Heart left ventricle (tissue), 16 donors: ENCODE measurements at regions of chr21 and their contacts with region 1.

Region 1: DNA sequence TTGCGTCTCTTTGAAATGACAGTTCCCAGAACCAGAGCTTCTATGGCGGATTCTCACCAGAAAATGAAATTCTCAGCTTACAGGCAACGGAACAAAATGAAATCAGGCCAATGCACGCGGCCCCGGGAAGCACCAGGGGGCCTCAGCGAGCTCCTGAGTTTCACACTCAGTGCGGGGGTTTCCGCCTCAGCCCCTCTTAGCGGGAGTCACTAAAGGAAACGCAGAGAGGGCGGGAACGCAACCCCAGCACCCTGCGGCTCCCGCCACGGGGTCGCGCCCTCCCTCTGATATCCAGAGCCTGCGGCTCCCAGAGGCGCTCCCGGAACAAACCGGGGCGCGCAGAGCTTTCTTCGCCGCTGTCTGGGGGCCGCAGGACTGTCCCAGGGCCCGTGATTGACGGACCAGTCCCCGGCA is 7.9 kb upstream of the COL6A1 start:
- DNase-seq: peak; percentile 87 to 92 (median 90)
- ATAC-seq: peak; percentile 39 to 48 (median 43)
- H3K4me3 ChIP-seq: peak overlapping the region; percentile 29 to 69 (median 60)
- H3K27ac ChIP-seq: peak overlapping the region; percentile 90 to 99 (median 98)
- H3K4me1 ChIP-seq: peaks cover 7 to 72% (median 50%) of the 10 kb centered on the region in 12 donors
- H3K27me3 ChIP-seq: peaks cover 0 to 43% (median 0%) of the 10 kb centered on the region in 9 donors
- CTCF ChIP-seq: peak; percentile 69 to 88 (median 78)
- POLR2A ChIP-seq: no peak

Region 2: DNA sequence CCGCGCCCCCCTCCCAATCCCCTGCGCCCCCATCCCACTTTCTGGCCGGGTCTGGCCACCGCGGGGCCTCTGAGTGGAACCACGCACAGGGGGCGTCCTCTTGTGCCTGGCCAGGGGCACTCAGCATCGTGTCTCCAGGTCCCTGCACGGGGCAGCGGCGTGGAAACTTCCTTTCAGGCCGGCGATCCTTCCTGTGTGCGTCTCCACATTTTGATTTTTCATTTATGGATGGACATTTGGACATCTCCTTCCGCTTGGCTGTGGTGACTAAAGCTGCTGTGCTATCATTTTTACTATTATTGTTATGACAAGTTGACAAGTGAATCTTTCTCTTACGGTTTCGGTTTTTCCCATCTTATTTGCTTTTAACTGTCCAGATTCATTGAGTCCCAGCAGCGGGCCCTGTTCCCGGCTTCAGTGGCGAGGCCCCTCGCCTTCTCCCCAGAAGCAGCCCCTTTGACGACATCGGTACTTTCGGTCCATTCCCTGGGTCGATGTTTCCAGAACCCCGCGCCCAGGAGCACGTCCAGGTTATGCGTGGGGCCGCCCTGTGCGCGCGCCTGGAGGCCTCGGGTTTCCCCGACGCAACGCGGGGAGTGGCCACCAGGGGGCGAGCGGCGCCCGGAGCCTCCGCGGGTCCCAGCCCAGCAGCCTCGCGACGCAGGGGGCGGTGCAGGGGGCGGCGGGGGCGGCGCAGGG is 419.0 kb before region 1 on chr21:
- intact Hi-C with region 1: no loop called
- DNase-seq: peak; percentile 76 to 93 (median 84)
- ATAC-seq: peak; percentile 70 to 84 (median 76)
- H3K4me3 ChIP-seq: peak overlapping the region; percentile 17 to 72 (median 58)
- H3K27ac ChIP-seq: peak overlapping the region in 6 of 12 donors; percentile 12 to 88 (median 68)
- H3K4me1 ChIP-seq: peaks cover 0 to 45% (median 4%) of the 10 kb centered on the region in 12 donors
- H3K27me3 ChIP-seq: peaks cover 0 to 10% (median 0%) of the 10 kb centered on the region in 9 donors
- CTCF ChIP-seq: peak; percentile 65 to 88 (median 78)
- POLR2A ChIP-seq: no peak

Region 3: DNA sequence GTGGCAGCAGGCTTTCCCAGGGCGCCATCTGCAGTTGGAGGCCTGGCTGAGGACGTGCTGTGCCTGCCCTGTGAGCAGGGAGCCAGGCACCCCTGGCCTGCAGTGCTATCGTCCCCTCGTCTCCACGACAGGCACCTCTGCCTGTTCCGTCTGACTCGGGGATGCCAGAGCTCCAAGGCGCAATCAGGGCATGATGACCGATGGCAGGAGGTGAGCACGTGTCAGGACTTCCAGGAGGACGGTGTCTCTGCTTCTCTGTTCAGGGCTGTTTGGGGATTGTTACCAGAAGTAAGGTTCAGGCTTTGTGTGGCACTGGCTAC is 205.0 kb before region 1 on chr21:
- intact Hi-C with region 1: no loop called
- DNase-seq: peak in 1 of 5 donors; percentile 30
- ATAC-seq: peak in 1 of 4 donors; percentile 14
- H3K4me3 ChIP-seq: no peak overlapping the region
- H3K27ac ChIP-seq: no peak overlapping the region
- H3K4me1 ChIP-seq: no peaks in the 10 kb centered on the region
- H3K27me3 ChIP-seq: no peaks in the 10 kb centered on the region
- CTCF ChIP-seq: peak in 1 of 12 donors; percentile 9
- POLR2A ChIP-seq: no peak

Region 4: DNA sequence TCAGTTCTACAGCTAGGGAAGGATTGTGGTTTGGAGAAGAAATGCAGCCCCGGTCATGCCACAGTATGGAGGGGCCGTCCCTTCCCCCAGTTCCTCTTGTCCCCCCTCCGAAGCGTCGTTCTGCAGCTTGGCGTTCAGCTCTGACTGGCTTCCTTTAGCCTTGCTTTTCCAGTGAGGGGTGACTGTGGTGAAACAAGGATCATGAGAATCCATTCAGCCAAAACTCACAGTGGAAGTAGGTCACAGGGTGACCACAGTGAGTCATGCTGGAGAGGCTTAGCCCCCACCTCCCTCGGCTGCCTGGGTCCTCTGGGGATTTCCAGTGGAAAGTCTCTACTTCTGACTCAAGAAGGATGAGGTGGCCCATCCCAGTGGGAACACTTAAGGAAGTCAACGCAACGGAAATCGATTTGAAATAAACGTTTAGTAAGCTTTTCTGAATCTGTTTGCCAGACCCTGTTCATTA is 87.0 kb after region 1 on chr21:
- intact Hi-C with region 1: loop called in 1 of 10 experiments (anchors 10 kb)
- DNase-seq: peak; percentile 82 to 88 (median 84)
- ATAC-seq: peak; percentile 48 to 75 (median 72)
- H3K4me3 ChIP-seq: no peak overlapping the region
- H3K27ac ChIP-seq: peak overlapping the region; percentile 46 to 94 (median 80)
- H3K4me1 ChIP-seq: peaks cover 0 to 38% (median 25%) of the 10 kb centered on the region in 12 donors
- H3K27me3 ChIP-seq: peaks cover 0 to 7% (median 0%) of the 10 kb centered on the region in 9 donors
- CTCF ChIP-seq: no peak
- POLR2A ChIP-seq: no peak

Region 5: DNA sequence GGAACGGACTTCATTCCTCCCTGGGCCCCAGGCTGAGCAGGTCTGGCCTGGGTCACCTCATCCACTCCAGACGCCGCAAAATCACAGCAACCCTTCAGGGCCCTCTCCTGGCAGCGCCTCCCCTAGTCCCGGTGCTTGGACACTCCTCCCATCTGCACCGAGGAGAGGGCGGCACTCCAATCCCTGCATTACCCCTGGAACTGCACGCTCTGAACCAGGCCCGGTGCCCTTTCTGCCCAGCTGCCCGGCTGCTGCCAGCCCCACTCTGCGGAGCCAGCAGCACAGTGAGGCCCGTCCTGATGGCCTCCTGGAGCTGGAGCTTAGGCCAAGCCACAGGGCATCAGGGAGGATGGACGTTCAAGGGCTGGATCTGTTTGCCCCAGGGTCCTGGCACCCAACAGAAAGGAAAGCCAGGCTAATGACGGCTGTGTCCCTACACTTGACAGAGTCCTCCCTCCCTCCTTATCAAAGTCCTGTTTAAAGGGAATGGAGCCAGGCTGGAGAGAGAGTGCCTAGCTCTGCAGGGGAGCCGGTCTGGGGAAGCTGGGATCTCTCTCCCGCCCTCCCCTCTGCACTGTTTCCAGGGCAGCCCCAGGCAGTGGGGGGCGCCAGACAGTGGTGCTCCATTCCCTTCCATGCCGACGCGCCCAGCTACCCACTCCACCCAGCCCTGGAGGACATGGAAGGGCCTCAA is 137.0 kb after region 1 on chr21:
- intact Hi-C with region 1: loop called in 1 of 10 experiments (anchors 5 kb)
- DNase-seq: peak; percentile 62 to 87 (median 76)
- ATAC-seq: peak; percentile 91 to 96 (median 95)
- H3K4me3 ChIP-seq: peak overlapping the region in 6 of 12 donors; percentile 0 to 19 (median 6)
- H3K27ac ChIP-seq: peak overlapping the region; percentile 29 to 91 (median 80)
- H3K4me1 ChIP-seq: peaks cover 0 to 27% (median 18%) of the 10 kb centered on the region in 12 donors
- H3K27me3 ChIP-seq: no peaks in the 10 kb centered on the region
- CTCF ChIP-seq: peak in 3 of 12 donors; percentile 7 to 36 (median 30)
- POLR2A ChIP-seq: no peak

Region 6: DNA sequence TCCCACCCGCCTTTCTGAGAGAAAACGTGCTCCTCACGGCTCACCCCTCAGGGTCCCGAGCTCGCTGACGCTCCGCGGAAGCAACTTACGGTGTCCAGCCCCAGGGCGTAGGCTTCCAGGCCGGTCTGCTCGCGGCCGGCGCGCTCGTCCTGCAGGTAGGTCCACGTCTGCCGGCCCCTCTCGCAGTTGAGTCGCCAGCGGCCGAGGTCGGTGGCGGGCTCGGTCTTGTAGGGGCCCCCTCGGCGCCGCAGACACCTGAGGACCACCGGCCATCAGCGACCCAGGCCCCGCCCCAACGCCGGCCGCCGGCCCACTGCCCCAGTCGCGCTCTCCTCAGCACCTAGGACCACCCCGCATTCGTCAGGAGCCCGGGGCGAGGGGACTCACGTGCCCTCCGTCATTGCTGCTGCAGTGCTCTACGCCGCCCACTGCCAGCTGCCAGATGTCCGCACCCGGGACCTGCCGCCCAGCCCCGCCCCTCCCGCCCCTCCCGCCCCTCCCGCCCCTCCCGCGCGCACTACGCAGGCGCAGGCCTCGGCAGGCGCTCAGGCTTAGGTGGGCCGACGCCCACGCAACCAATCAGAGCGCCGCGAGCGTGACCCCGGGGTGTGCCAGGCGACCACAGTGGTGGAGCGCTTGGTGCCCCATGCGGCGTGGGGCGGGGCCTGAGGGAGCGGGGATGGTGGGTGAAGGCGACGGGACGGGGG is 254.8 kb after region 1 on chr21 and contains the start of gene LSS:
- intact Hi-C with region 1: loop called in 6 of 10 experiments (anchors 5 to 10 kb)
- DNase-seq: peak; percentile 97 to 100 (median 99)
- ATAC-seq: peak; percentile 95 to 98 (median 97)
- H3K4me3 ChIP-seq: peak within 1 kb of the TSS; percentile 63 to 99 (median 95)
- H3K27ac ChIP-seq: peak within 1 kb of the TSS; percentile 62 to 91 (median 84)
- H3K4me1 ChIP-seq: peaks cover 0 to 47% (median 23%) of the 10 kb centered on the region in 12 donors
- H3K27me3 ChIP-seq: no peaks in the 10 kb centered on the region
- CTCF ChIP-seq: no peak
- POLR2A ChIP-seq: peak in 1 of 2 donors; percentile 64
- total RNA-seq, gene LSS: 34.2 to 65.5 (median 41.7) TPM

Region 7: GRCh38 chr21:46323227-46324128 is 349.8 kb after region 1 on chr21 and contains the start of gene C21orf58:
- intact Hi-C with region 1: loop called in 2 of 10 experiments (anchors 5 to 10 kb)
- DNase-seq: peak; percentile 98 to 100 (median 99)
- ATAC-seq: peak; percentile 93 to 97 (median 96)
- H3K4me3 ChIP-seq: peak within 1 kb of the TSS; percentile 77 to 100 (median 96)
- H3K27ac ChIP-seq: peak within 1 kb of the TSS; percentile 92 to 100 (median 98)
- H3K4me1 ChIP-seq: peaks cover 4 to 37% (median 19%) of the 10 kb centered on the region in 12 donors
- H3K27me3 ChIP-seq: no peaks in the 10 kb centered on the region
- CTCF ChIP-seq: peak in 2 of 12 donors; percentile 4 to 12
- POLR2A ChIP-seq: no peak
- total RNA-seq, gene C21orf58: 0.72 to 4.0 (median 1.3) TPM